Heart left ventricle (tissue), 16 donors: ENCODE measurements at regions of chr2 and their contacts with region 1.

Region 1: DNA sequence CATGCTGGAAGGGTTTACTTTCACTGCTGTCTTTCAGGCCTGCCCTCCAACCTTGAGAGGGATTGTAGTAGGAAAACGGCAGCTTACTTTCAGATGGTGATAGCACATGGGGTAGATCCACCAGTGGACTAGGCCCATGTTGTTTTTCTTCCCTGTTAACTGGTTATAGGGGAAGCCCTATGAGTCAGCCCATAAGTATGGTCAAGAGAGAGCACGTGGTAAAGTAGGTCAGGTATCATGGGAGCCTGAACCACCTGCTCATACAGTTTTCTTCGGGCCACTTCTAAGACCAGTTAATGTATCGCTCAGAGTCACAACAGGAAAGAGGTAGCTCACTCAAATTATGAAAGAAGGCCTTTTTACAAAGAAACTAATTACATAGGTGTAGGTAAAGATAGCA is 33.0 kb downstream of the PDK1 start:
- DNase-seq: no peak
- ATAC-seq: no peak
- H3K4me3 ChIP-seq: no peak overlapping the region
- H3K27ac ChIP-seq: no peak overlapping the region
- H3K4me1 ChIP-seq: peaks cover 0 to 4% (median 0%) of the 10 kb centered on the region in 12 donors
- H3K27me3 ChIP-seq: no peaks in the 10 kb centered on the region
- CTCF ChIP-seq: no peak
- POLR2A ChIP-seq: no peak

Region 2: GRCh38 chr2:172525606-172526005 is 63.3 kb before region 1 on chr2:
- intact Hi-C with region 1: no loop called
- DNase-seq: no peak
- ATAC-seq: no peak
- H3K4me3 ChIP-seq: no peak overlapping the region
- H3K27ac ChIP-seq: no peak overlapping the region
- H3K4me1 ChIP-seq: no peaks in the 10 kb centered on the region
- H3K27me3 ChIP-seq: no peaks in the 10 kb centered on the region
- CTCF ChIP-seq: no peak
- POLR2A ChIP-seq: no peak

Region 3: GRCh38 chr2:172555522-172556283 is 33.2 kb before region 1 on chr2 and contains the start of gene PDK1:
- intact Hi-C with region 1: no loop called
- DNase-seq: peak; percentile 90 to 96 (median 92)
- ATAC-seq: peak; percentile 90 to 97 (median 96)
- H3K4me3 ChIP-seq: peak within 1 kb of the TSS; percentile 57 to 96 (median 81)
- H3K27ac ChIP-seq: peak within 1 kb of the TSS; percentile 22 to 97 (median 95)
- H3K4me1 ChIP-seq: peaks cover 0 to 23% (median 9%) of the 10 kb centered on the region in 12 donors
- H3K27me3 ChIP-seq: no peaks in the 10 kb centered on the region
- CTCF ChIP-seq: no peak
- POLR2A ChIP-seq: peak in 1 of 2 donors; percentile 79
- total RNA-seq, gene PDK1: 27.2 to 69.0 (median 53.2) TPM

Region 4: DNA sequence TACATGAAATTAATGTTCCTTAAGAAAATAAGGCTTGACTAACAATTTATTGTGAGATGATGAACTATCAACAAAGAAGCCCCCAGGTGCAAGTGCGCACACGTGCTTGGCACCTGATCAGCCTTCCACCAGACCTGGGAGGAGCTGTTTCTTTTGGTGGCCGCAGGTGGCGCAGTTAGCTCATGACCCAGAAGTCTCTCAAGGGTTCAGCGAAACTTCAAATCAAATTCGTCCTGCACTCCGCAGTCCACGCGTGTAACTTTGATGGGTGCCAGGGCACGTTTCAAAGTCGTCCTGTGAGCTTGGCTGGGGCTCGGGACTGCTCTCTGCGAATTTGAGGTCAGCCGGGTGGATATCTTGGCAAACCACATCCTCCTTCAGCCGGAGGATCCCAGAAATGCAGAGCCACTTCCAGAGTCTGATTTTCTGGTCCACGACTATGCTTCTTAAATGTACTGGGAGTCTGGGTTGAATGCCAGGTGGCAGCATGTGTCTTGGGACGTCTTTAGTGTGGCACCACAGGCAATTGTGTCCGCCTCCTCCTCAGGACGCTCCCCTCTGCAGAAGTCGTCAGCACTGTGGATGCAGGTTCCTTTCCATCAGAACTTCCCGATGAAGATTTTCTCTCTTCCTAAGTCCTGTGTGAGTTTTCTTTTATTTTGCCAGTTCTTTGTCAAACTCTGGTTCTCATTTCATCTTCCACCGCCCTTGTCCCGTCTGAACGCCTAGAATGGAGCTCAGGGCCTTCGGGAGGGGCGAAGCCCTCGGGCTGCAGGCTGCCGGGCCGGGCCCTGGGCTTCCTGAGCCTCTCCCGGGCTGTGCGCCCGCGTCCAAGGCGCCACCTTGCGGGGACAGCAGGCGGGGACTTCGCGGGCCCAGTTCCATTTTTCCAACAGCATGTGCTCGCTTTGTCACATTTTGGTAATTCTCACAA is 85.4 kb after region 1 on chr2:
- intact Hi-C with region 1: loop called in 5 of 10 experiments (anchors 5 to 10 kb)
- DNase-seq: peak in 4 of 5 donors; percentile 31 to 45 (median 36)
- ATAC-seq: peak in 3 of 4 donors; percentile 58 to 78 (median 72)
- H3K4me3 ChIP-seq: peak overlapping the region in 5 of 12 donors; percentile 8 to 33 (median 20)
- H3K27ac ChIP-seq: no peak overlapping the region
- H3K4me1 ChIP-seq: peaks cover 0 to 4% (median 0%) of the 10 kb centered on the region in 12 donors
- H3K27me3 ChIP-seq: no peaks in the 10 kb centered on the region
- CTCF ChIP-seq: peak; percentile 41 to 77 (median 52)
- POLR2A ChIP-seq: no peak

Region 5: GRCh38 chr2:172710584-172711024 is 121.7 kb after region 1 on chr2:
- intact Hi-C with region 1: loop called in 7 of 10 experiments (anchors 2 to 10 kb)
- DNase-seq: peak in 1 of 5 donors; percentile 35
- ATAC-seq: peak; percentile 78 to 84 (median 82)
- H3K4me3 ChIP-seq: no peak overlapping the region
- H3K27ac ChIP-seq: peak overlapping the region in 9 of 12 donors; percentile 24 to 65 (median 53)
- H3K4me1 ChIP-seq: peaks cover 0 to 18% (median 3%) of the 10 kb centered on the region in 12 donors
- H3K27me3 ChIP-seq: peaks cover 0 to 6% (median 0%) of the 10 kb centered on the region in 9 donors
- CTCF ChIP-seq: peak; percentile 34 to 74 (median 56)
- POLR2A ChIP-seq: no peak